ENCODE measurements at regions of chr10 and their contacts with region 1.

Region 1: GRCh38 chr10:52313933-52314816 is at the start of gene DKK1:
- DNase-seq: peak; percentile 67 to 89
- H3K4me3 ChIP-seq: peak within 1 kb of the TSS; percentile 43 to 56 (median 46)
- H3K27ac ChIP-seq: no peak within 1 kb of the TSS
- H3K4me1 ChIP-seq: peaks cover 13 to 25% (median 22%) of the 10 kb centered on the region in 4 donors
- H3K27me3 ChIP-seq: peaks cover 0 to 64% (median 23%) of the 10 kb centered on the region in 3 donors
- CTCF ChIP-seq: peak in 5 of 7 experiments; percentile 20 to 66 (median 46)
- EP300 ChIP-seq: no peak
- POLR2A ChIP-seq: no peak
- total RNA-seq, gene DKK1: 1.2 to 3.5 TPM in 2 of 5 donors, not detected in the others

Region 2: GRCh38 chr10:52488606-52489485 is 174.7 kb after region 1 on chr10:
- intact Hi-C with region 1: loop called (anchors 5 kb)
- DNase-seq: peak in 1 of 2 donors; percentile 74
- H3K4me3 ChIP-seq: no peak overlapping the region
- H3K27ac ChIP-seq: no peak overlapping the region
- H3K4me1 ChIP-seq: no peaks in the 10 kb centered on the region
- H3K27me3 ChIP-seq: no peaks in the 10 kb centered on the region
- CTCF ChIP-seq: peak in 4 of 7 experiments; percentile 34 to 58 (median 42)
- EP300 ChIP-seq: no peak
- POLR2A ChIP-seq: no peak

Region 3: GRCh38 chr10:52703898-52704297 is 389.7 kb after region 1 on chr10:
- intact Hi-C with region 1: no loop called
- DNase-seq: no peak
- H3K4me3 ChIP-seq: no peak overlapping the region
- H3K27ac ChIP-seq: no peak overlapping the region
- H3K4me1 ChIP-seq: no peaks in the 10 kb centered on the region
- H3K27me3 ChIP-seq: no peaks in the 10 kb centered on the region
- CTCF ChIP-seq: no peak
- EP300 ChIP-seq: no peak
- POLR2A ChIP-seq: no peak